Body of pancreas (tissue), 4 donors: ENCODE measurements at regions of chrX and their contacts with region 1.

Region 1: GRCh38 chrX:20252381-20253231 is 14.1 kb downstream of the RPS6KA3 start:
- DNase-seq: peak; percentile 55 to 73 (median 61)
- ATAC-seq: peak; percentile 67
- H3K4me3 ChIP-seq: no peak overlapping the region
- H3K27ac ChIP-seq: no peak overlapping the region
- H3K4me1 ChIP-seq: no peaks in the 10 kb centered on the region
- H3K27me3 ChIP-seq: no peaks in the 10 kb centered on the region
- CTCF ChIP-seq: peak; percentile 46 to 74 (median 60)
- POLR2A ChIP-seq: no peak

Region 2: DNA sequence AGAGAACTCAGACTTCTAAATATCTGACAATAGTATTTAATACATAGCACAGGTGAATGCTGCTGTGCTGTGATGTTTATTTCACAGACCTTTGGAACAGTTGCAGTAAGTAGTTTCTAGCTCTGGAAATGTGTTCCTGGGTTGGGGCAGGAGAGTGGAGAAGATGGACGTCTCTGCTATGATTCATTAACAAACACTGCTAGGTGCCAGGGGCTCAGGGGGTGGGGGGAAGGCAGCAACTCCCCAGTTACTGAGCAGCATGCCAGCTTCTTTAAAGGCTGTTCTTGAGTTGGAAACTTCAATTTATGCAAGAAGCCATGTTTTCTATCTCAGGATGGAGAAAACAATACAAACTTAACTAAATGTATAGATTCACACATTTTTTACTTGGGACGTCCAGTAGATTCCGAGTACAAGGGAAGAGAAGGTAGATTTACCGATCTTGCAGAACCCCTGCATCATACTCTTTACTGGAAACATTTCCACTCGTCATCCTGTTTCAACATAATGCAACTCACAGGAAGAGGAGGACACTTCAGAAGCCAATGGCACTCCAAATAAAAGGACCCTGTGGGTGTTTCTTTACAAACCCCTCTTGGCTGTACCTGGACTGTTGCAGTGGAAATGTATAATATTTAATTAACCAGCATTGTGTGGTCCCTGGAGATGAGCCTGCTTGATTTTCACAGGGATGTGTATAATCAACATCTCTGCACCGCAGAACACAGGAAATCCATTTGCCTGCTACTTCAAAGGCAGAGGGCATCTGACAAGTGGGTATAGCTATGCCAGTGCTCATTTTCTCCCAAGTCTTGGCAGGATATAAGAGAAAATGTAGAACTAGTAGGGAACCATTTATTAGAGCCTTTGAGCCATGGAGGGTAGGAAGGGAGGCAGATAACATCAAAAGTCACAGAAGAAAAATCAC is 536.6 kb before region 1 on chrX:
- intact Hi-C with region 1: no loop called
- DNase-seq: no peak
- ATAC-seq: no peak
- H3K4me3 ChIP-seq: no peak overlapping the region
- H3K27ac ChIP-seq: no peak overlapping the region
- H3K4me1 ChIP-seq: no peaks in the 10 kb centered on the region
- H3K27me3 ChIP-seq: no peaks in the 10 kb centered on the region
- CTCF ChIP-seq: no peak
- POLR2A ChIP-seq: no peak

Region 3: GRCh38 chrX:20112021-20112797 is 140.4 kb before region 1 on chrX:
- intact Hi-C with region 1: no loop called
- DNase-seq: no peak
- ATAC-seq: no peak
- H3K4me3 ChIP-seq: no peak overlapping the region
- H3K27ac ChIP-seq: no peak overlapping the region
- H3K4me1 ChIP-seq: no peaks in the 10 kb centered on the region
- H3K27me3 ChIP-seq: no peaks in the 10 kb centered on the region
- CTCF ChIP-seq: no peak
- POLR2A ChIP-seq: no peak

Region 4: GRCh38 chrX:20128670-20129069 is 123.9 kb before region 1 on chrX:
- intact Hi-C with region 1: no loop called
- DNase-seq: no peak
- ATAC-seq: no peak
- H3K4me3 ChIP-seq: no peak overlapping the region
- H3K27ac ChIP-seq: no peak overlapping the region
- H3K4me1 ChIP-seq: no peaks in the 10 kb centered on the region
- H3K27me3 ChIP-seq: no peaks in the 10 kb centered on the region
- CTCF ChIP-seq: no peak
- POLR2A ChIP-seq: no peak

Region 5: DNA sequence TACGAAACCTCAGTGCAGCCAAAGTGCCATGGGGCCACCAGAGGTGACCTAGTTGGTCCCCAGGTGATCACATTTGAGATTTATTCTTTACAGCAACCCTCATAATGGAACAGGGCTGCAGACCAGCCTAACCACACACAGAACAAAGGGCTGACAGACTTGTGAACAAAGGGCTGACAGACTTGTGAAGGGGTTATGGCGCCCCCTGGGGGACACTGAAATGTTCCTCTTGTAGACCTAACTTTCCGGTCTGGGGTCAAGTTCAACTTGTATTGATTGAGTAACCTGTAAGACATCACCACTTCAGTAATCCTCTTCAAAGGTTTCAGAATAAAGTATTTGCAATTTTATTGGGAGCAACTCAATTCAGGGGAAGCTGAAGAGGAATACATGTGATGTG is 190.0 kb after region 1 on chrX:
- intact Hi-C with region 1: loop called (anchors 5 kb)
- DNase-seq: peak; percentile 85 to 92 (median 86)
- ATAC-seq: peak; percentile 83
- H3K4me3 ChIP-seq: no peak overlapping the region
- H3K27ac ChIP-seq: no peak overlapping the region
- H3K4me1 ChIP-seq: no peaks in the 10 kb centered on the region
- H3K27me3 ChIP-seq: no peaks in the 10 kb centered on the region
- CTCF ChIP-seq: peak; percentile 35 to 78 (median 63)
- POLR2A ChIP-seq: no peak